ENCODE measurements at regions of chr6 and their contacts with region 1.

Region 1: GRCh38 chr6:142885182-142885867 is 59.7 kb downstream of the HIVEP2 start:
- DNase-seq: peak; percentile 94
- ATAC-seq: peak; percentile 91
- H3K4me3 ChIP-seq: peak overlapping the region; percentile 37 to 51
- H3K27ac ChIP-seq: peak overlapping the region; percentile 58
- H3K4me1 ChIP-seq: peaks cover 19 to 38% of the 10 kb centered on the region in 2 experiments
- H3K27me3 ChIP-seq: no peaks in the 10 kb centered on the region
- CTCF ChIP-seq: no peak
- POLR2A ChIP-seq: no peak
- RAD21 ChIP-seq: peak; percentile 46; the same call in 1 of the 2 replicates

Region 2: GRCh38 chr6:142902636-142903053 is 17.3 kb after region 1 on chr6:
- CTCF ChIA-PET with region 1: no interaction called
- POLR2A ChIA-PET with region 1: no interaction called
- RAD21 ChIA-PET with region 1: no interaction called
- intact Hi-C with region 1: no loop called
- DNase-seq: peak; percentile 80
- ATAC-seq: peak; percentile 95
- H3K4me3 ChIP-seq: peak overlapping the region; percentile 6 to 40; a peak in 2 of 4 replicates
- H3K27ac ChIP-seq: no peak overlapping the region
- H3K4me1 ChIP-seq: peaks cover 7 to 23% of the 10 kb centered on the region in 2 experiments; a peak in 3 of 4 replicates
- H3K27me3 ChIP-seq: no peaks in the 10 kb centered on the region
- CTCF ChIP-seq: no peak
- POLR2A ChIP-seq: no peak
- RAD21 ChIP-seq: peak; percentile 16; the same call in 1 of the 2 replicates

Region 3: GRCh38 chr6:142926494-142927270 is 41.4 kb after region 1 on chr6:
- CTCF ChIA-PET with region 1: no interaction called
- POLR2A ChIA-PET with region 1: no interaction called
- RAD21 ChIA-PET with region 1: no interaction called
- intact Hi-C with region 1: loop called (anchors 5 kb)
- DNase-seq: no peak
- ATAC-seq: peak; percentile 86
- H3K4me3 ChIP-seq: peak overlapping the region; percentile 58 to 64
- H3K27ac ChIP-seq: peak overlapping the region; percentile 2; the same call in 1 of the 2 replicates
- H3K4me1 ChIP-seq: peaks cover 5 to 18% of the 10 kb centered on the region in 2 experiments; a peak in 3 of 4 replicates
- H3K27me3 ChIP-seq: no peaks in the 10 kb centered on the region
- CTCF ChIP-seq: no peak
- POLR2A ChIP-seq: no peak
- RAD21 ChIP-seq: no peak

Measured in HCT116 (cell line).